ENCODE measurements at regions of chr10 and their contacts with region 1.

Region 1: DNA sequence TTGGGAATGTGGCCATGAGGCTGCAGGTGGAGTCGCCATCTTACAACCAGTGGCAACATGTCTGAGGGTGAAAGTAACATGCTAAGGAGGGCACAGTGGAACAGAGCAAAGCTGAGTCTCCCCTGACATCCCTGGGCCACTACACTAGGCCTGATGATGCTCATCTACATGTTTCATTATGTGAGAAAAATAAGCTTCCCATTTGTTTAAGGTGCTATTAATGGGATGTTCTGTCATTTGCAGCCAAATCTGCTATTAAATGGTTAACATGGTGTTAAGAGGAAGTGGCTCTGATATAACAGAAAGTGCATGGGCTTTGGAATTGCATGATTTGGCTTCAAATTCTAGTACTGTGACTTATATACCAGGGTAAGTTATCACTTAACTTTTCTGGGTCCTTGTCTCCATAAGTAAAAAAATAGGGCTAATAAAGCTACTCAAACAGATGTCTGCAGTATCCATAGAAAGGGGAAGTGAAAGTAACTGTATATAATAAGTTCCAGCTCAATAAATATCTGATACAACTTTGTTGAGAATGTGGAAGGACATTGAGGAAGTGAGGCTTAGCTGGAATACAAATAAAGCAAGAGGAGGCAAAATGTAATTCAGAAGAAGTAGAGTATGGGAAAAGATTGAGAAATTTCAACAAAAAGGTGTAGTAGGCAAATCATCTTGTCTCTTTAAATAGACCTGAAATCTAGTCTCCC is 158.9 kb downstream of the RTKN2 start:
- DNase-seq: peak; percentile 82
- ATAC-seq: peak; percentile 82
- H3K4me3 ChIP-seq: peak overlapping the region in 1 of 5 experiments; percentile 6
- H3K4me3 Mint-ChIP-seq: peak overlapping the region; percentile 18
- H3K27ac ChIP-seq: peak overlapping the region; percentile 66 to 69
- H3K27ac Mint-ChIP-seq: peak overlapping the region; percentile 54
- H3K4me1 ChIP-seq: peaks cover 52 to 65% of the 10 kb centered on the region in 2 donors
- H3K4me1 Mint-ChIP-seq: peaks cover 65% of the 10 kb centered on the region
- H3K27me3 ChIP-seq: no peaks in the 10 kb centered on the region
- H3K27me3 Mint-ChIP-seq: no peaks in the 10 kb centered on the region
- CTCF ChIP-seq: no peak

Region 2: GRCh38 chr10:62025901-62026879 is 83.5 kb before region 1 on chr10:
- CTCF ChIA-PET with region 1: no interaction called
- POLR2A ChIA-PET with region 1: interaction called, 11 read pairs
- intact Hi-C with region 1: no loop called
- DNase-seq: no peak
- ATAC-seq: no peak
- H3K4me3 ChIP-seq: no peak overlapping the region
- H3K4me3 Mint-ChIP-seq: peak overlapping the region; percentile 24
- H3K27ac ChIP-seq: peak overlapping the region in 1 of 2 donors; percentile 98
- H3K27ac Mint-ChIP-seq: peak overlapping the region; percentile 96
- H3K4me1 ChIP-seq: peaks cover 76 to 79% of the 10 kb centered on the region in 2 donors
- H3K4me1 Mint-ChIP-seq: peaks cover 88% of the 10 kb centered on the region
- H3K27me3 ChIP-seq: no peaks in the 10 kb centered on the region
- H3K27me3 Mint-ChIP-seq: no peaks in the 10 kb centered on the region
- CTCF ChIP-seq: no peak

Region 3: DNA sequence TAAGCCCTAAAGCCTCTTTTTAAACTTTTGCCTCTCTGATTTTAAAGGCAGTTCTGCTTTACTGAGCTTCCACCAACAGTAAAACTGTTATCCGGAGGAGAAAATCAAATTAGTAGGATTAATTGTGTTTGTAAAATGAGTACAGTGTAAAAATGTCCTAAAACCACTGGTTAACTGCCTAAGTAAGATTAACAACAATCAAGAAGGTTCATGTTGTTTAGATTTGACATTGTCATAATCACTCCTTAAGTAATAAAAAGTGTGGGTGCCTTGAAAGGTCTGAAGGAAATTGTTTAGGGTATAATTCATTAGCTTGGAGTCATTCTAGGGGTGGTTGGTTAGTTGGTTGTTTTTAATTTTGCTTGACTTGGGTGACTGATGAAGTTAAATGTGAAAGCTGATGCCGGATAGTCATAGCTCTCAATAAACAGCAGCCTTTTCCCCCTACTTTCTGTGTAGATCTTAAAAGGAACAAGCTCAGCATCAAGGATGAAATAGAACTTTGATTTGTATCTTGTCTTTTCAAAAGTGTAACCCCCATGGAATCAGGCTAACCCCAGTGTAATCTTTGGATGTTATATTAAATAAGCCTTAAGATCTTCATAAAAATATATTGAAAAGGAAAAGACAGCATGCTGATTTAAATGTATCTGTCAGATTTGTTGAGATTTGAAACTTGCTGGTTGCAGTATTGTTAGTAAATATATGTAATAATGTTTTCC is 60.0 kb before region 1 on chr10:
- CTCF ChIA-PET with region 1: no interaction called
- POLR2A ChIA-PET with region 1: no interaction called
- intact Hi-C with region 1: no loop called
- DNase-seq: no peak
- ATAC-seq: no peak
- H3K4me3 ChIP-seq: peak overlapping the region in 4 of 5 experiments; percentile 39 to 60 (median 44)
- H3K4me3 Mint-ChIP-seq: peak overlapping the region; percentile 85
- H3K27ac ChIP-seq: peak overlapping the region; percentile 85 to 92
- H3K27ac Mint-ChIP-seq: peak overlapping the region; percentile 86
- H3K4me1 ChIP-seq: peaks cover 92 to 96% of the 10 kb centered on the region in 2 donors
- H3K4me1 Mint-ChIP-seq: peaks cover 95% of the 10 kb centered on the region
- H3K27me3 ChIP-seq: no peaks in the 10 kb centered on the region
- H3K27me3 Mint-ChIP-seq: no peaks in the 10 kb centered on the region
- CTCF ChIP-seq: no peak

Region 4: GRCh38 chr10:62082729-62083411 is 26.9 kb before region 1 on chr10:
- CTCF ChIA-PET with region 1: interaction called, 3 read pairs
- POLR2A ChIA-PET with region 1: interaction called, 3 read pairs
- intact Hi-C with region 1: loop called (anchors 2 kb)
- DNase-seq: no peak
- ATAC-seq: peak; percentile 29
- H3K4me3 ChIP-seq: peak overlapping the region; percentile 10 to 38 (median 36)
- H3K4me3 Mint-ChIP-seq: peak overlapping the region; percentile 79
- H3K27ac ChIP-seq: peak overlapping the region; percentile 90 to 91
- H3K27ac Mint-ChIP-seq: peak overlapping the region; percentile 86
- H3K4me1 ChIP-seq: peaks cover 76 to 78% of the 10 kb centered on the region in 2 donors
- H3K4me1 Mint-ChIP-seq: peaks cover 79% of the 10 kb centered on the region
- H3K27me3 ChIP-seq: no peaks in the 10 kb centered on the region
- H3K27me3 Mint-ChIP-seq: no peaks in the 10 kb centered on the region
- CTCF ChIP-seq: no peak

Region 5: GRCh38 chr10:62166331-62167131 is 56.8 kb after region 1 on chr10:
- CTCF ChIA-PET with region 1: no interaction called
- POLR2A ChIA-PET with region 1: interaction called, 3 read pairs
- intact Hi-C with region 1: loop called (anchors 5 kb)
- DNase-seq: peak; percentile 72
- ATAC-seq: peak; percentile 92
- H3K4me3 ChIP-seq: peak overlapping the region in 1 of 5 experiments; percentile 34
- H3K4me3 Mint-ChIP-seq: peak overlapping the region; percentile 1
- H3K27ac ChIP-seq: peak overlapping the region in 1 of 2 donors; percentile 4
- H3K27ac Mint-ChIP-seq: peak overlapping the region; percentile 59
- H3K4me1 ChIP-seq: peaks cover 25 to 28% of the 10 kb centered on the region in 2 donors
- H3K4me1 Mint-ChIP-seq: peaks cover 29% of the 10 kb centered on the region
- H3K27me3 ChIP-seq: no peaks in the 10 kb centered on the region
- H3K27me3 Mint-ChIP-seq: no peaks in the 10 kb centered on the region
- CTCF ChIP-seq: no peak